Activated T-helper 2 cell treated with anti-CD3 and anti-CD28 coated beads, Interferon-gamma antibody, Interleukin-2, Interleukin-4, amounts not matched to agents 10 μg/mL and 5 μg/mL and 100 μg/mL, durations not matched to agents 14 hours and 24 hours and 36 hours (primary cell): ENCODE measurements at regions of chr6 and their contacts with region 1.

Region 1: DNA sequence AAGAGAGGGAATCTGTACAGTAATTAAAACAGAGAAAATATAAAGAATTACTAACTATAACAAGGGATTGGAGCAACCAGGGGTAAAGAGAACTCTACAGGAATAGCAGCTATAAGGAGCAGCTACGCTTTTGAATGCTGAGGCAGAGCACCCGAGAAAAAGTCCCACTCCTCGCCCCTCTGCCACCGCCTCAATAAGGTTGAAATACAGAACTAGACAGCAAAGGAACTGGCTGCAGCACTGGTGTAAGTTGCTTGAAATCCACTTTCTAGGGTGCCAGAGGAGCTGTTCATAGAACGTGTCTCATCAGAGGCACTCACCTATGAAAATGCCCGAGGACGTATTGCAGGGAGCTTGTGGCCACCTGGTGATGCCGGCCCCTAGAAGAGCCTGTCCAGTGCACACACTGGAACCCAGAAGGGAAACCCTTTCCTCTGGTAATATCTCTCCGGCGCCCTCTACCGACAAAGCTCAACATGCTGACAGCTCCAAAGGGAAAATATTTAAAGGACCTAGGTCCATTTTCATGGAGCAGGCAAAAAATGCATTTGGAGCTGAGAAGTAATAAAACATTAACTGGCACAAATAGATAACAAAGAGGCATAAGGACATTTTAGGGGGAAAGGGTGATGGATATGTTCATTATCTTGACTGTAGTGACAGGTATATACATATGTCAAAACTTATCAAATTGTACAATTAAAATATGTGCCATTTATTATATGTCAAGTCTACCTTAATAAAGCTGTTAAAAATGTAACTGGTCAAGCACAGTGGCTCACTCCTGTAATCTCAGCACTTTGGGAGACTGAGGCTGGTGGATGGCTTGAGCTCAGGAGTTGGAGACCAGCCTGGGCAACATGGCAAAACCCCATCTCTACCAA is 137.4 kb upstream of the HDAC2 start:
- DNase-seq: peak; percentile 28
- H3K4me3 Mint-ChIP-seq: no peak overlapping the region
- H3K27ac Mint-ChIP-seq: no peak overlapping the region
- H3K4me1 Mint-ChIP-seq: no peaks in the 10 kb centered on the region
- H3K27me3 Mint-ChIP-seq: peaks cover 3% of the 10 kb centered on the region

Region 2: DNA sequence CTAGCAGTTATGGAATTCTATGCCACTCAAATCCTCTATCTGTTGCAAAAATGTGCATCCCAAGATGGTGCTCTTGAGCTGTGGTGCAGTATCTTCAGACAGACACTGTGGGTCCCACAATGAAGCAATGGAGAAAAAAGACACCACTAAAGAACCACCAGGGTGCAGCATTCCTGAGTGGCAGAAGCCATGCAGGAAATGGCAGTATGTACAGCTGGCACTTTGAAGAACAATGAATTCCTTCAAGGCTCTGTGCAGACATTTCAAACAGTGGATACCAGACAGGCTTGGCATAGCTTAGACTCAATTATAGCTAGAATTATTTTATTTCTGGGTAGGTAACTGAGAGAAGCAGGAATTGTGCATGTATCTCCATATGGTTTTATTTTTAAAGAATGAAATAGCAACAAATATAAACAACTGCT is 113.4 kb before region 1 on chr6:
- intact Hi-C with region 1: loop called (anchors 2 kb)
- DNase-seq: peak; percentile 25
- H3K4me3 Mint-ChIP-seq: no peak overlapping the region
- H3K27ac Mint-ChIP-seq: no peak overlapping the region
- H3K4me1 Mint-ChIP-seq: no peaks in the 10 kb centered on the region
- H3K27me3 Mint-ChIP-seq: peaks cover 14% of the 10 kb centered on the region